Activated CD4-positive, alpha-beta T cell treated with anti-CD3 and anti-CD28 coated beads for 36 hours (primary cell): ENCODE measurements at regions of chr2 and their contacts with region 1.

Region 1: GRCh38 chr2:102392942-102393341 is 30.0 kb upstream of the IL18RAP start:
- DNase-seq: no peak
- ATAC-seq: no peak
- H3K4me3 Mint-ChIP-seq: no peak overlapping the region
- H3K27ac Mint-ChIP-seq: no peak overlapping the region
- H3K4me1 Mint-ChIP-seq: peaks cover 22% of the 10 kb centered on the region
- H3K27me3 Mint-ChIP-seq: no peaks in the 10 kb centered on the region

Region 2: DNA sequence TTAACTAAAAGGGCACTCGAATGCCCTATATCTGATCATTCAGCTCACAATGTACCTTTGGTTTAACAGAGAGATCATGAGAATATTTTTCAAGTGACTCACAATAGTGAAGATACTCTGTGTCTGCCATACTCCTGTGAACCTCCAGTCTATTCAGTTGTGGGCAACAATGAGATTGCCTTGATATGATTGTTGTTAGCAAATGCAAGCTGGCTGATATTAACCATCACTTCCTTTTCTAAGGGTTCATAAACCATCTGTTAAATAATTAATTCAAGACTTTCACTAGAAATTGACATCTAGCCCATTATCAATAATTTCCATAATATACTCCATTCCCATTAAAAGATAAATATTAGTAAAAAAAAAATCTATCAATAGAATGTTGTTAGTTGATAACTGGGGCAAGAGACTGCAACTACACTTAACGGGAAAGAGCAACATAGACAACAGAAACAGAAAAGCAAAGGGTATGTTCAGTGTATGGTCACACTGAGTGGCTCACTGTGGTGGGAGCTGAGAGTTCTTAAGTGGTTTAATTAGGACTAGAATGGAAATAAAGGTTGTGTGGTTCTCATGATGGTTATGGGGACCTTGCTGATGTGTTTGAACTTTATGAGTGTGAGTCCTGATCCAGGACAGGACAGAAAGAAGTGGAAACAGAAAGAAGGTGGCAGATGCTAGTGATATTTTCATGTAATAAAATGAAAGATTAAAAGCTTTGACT is 41.9 kb after region 1 on chr2:
- CTCF ChIA-PET with region 1: no interaction called
- POLR2A ChIA-PET with region 1: no interaction called
- intact Hi-C with region 1: no loop called
- DNase-seq: no peak
- ATAC-seq: peak; percentile 7
- H3K4me3 Mint-ChIP-seq: no peak overlapping the region
- H3K27ac Mint-ChIP-seq: peak overlapping the region; percentile 11
- H3K4me1 Mint-ChIP-seq: peaks cover 38% of the 10 kb centered on the region
- H3K27me3 Mint-ChIP-seq: no peaks in the 10 kb centered on the region

Region 3: DNA sequence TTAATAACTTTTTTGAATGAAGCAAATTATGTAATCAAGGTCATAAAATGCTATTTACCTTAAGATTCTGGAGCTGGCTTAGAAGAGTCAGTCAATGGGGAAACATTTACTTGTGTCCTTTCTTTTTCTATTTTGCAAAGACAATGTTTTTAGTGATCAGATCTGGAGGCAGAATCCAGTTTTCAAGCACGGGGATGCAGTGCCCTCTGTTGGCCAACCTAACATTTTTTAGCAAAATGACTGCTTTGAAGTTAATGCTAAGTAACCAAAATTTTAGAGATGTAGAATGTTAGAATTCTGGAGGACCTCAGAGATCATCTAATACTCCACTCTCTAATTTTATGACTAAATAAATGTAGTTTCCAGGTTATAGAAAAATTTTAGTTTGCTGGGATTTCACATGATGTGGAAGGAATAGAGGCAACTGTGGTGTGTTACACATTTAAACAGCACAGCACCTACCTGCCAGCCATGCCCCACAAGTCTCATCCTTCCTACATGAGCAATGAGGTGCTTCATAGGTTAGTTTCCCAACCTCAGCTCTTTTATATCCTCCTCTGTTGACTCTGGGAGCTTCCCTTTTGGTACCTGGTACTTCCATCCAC is 56.5 kb after region 1 on chr2:
- CTCF ChIA-PET with region 1: no interaction called
- POLR2A ChIA-PET with region 1: no interaction called
- intact Hi-C with region 1: loop called in 1 of 2 experiments (anchors 2 kb)
- DNase-seq: peak; percentile 85
- ATAC-seq: peak; percentile 58
- H3K4me3 Mint-ChIP-seq: no peak overlapping the region
- H3K27ac Mint-ChIP-seq: no peak overlapping the region
- H3K4me1 Mint-ChIP-seq: peaks cover 6% of the 10 kb centered on the region
- H3K27me3 Mint-ChIP-seq: no peaks in the 10 kb centered on the region